IMR-90 (cell line): ENCODE measurements at regions of chr13 and their contacts with region 1.

Region 1: DNA sequence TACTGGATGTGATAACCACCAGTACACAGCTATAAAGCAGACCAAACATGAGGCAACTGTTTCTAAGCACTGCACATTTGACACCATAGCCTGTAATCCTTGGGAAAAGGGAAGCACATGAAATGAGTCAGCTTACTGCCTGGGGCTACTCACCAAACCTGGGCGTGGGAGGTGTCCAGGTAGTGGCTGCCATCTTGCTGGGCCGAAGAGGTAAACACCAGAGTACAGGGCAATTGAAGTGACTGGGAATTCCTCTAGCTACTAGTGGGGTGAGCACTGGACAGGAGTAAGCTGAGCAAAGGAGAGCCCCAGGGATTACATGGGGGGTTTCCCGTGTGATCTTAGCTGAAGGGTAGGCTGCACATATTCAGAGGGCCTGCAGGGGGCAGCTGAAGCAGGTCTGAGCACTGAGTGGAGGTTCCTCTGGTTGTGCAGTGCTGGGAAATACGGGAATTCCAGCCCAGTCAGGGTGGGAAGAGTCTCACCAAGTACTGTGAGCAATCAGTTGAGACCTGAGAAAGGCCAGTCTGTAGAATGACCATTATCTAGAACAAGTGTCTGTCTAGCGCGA is 140.5 kb downstream of the SLC7A1 start:
- DNase-seq: peak; percentile 7
- ATAC-seq: no peak
- H3K4me3 ChIP-seq: no peak overlapping the region
- H3K27ac ChIP-seq: no peak overlapping the region
- H3K4me1 ChIP-seq: no peaks in the 10 kb centered on the region
- H3K27me3 ChIP-seq: peaks cover 18% of the 10 kb centered on the region
- CTCF ChIP-seq: peak; percentile 36
- POLR2A ChIP-seq: no peak
- RAD21 ChIP-seq: peak; percentile 12; the same call in 1 of the 2 replicates

Region 2: GRCh38 chr13:29472332-29472961 is 17.5 kb after region 1 on chr13:
- CTCF ChIA-PET with region 1: interaction called, 10 read pairs
- POLR2A ChIA-PET with region 1: no interaction called
- dilution Hi-C with region 1: no loop called
- in situ Hi-C with region 1: no loop called
- intact Hi-C with region 1: no loop called
- DNase-seq: peak; percentile 58
- ATAC-seq: peak; percentile 53; the same call in 1 of the 2 replicates
- H3K4me3 ChIP-seq: no peak overlapping the region
- H3K27ac ChIP-seq: no peak overlapping the region
- H3K4me1 ChIP-seq: peaks cover 2% of the 10 kb centered on the region
- H3K27me3 ChIP-seq: peaks cover 8% of the 10 kb centered on the region
- CTCF ChIP-seq: peak; percentile 99
- POLR2A ChIP-seq: no peak
- RAD21 ChIP-seq: peak; percentile 65